Ascending aorta (tissue), 2 donors: ENCODE measurements at regions of chr6 and their contacts with region 1.

Region 1: DNA sequence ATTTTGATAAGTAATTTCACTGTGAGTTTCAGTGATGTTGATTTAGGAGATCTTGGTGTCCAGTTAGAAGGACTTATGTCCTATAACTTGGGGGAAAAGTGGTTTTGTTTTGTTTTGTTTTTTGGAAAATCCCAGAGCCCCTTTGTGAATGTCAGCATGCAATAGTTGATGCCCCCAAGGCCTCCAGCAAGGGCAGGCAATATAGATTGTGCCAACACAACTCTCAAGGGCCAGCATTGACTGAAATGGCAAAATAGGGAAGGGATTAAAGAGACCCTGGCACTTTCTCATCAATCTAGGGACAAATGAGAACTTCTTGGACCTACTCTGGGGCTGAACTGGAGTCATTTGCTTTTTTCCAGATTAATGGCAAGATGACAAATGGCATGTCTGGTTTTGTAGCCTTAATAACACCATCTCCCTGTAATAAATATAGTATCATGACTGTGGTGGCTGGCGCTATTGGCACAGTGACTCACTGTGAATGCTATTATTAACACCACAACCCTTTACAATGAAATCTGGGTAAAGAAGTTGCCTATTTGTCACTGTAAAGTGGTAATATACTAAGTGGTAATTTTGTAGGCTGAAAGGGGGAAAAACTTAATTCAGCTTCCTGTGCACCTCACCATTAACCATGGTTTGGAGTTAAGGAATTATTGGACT is 51.8 kb downstream of the ABRACL start:
- DNase-seq: peak in 1 of 2 donors; percentile 69
- H3K4me3 ChIP-seq: no peak overlapping the region
- H3K27ac ChIP-seq: peak overlapping the region; percentile 79 to 83
- H3K4me1 ChIP-seq: peaks cover 11 to 20% of the 10 kb centered on the region in 2 donors
- H3K27me3 ChIP-seq: no peaks in the 10 kb centered on the region
- CTCF ChIP-seq: no peak

Region 2: GRCh38 chr6:139028658-139029469 is 51.5 kb before region 1 on chr6 and contains the start of gene ABRACL:
- intact Hi-C with region 1: loop called (anchors 2 kb)
- DNase-seq: peak; percentile 19 to 82
- H3K4me3 ChIP-seq: peak within 1 kb of the TSS; percentile 72 to 90
- H3K27ac ChIP-seq: peak within 1 kb of the TSS; percentile 72 to 91
- H3K4me1 ChIP-seq: peaks cover 5 to 7% of the 10 kb centered on the region in 2 donors
- H3K27me3 ChIP-seq: no peaks in the 10 kb centered on the region
- CTCF ChIP-seq: no peak
- total RNA-seq, gene ABRACL: 27.6 TPM